Vagina (tissue), 2 donors: ENCODE measurements at regions of chr13 and their contacts with region 1.

Region 1: GRCh38 chr13:88704600-88705275 is 1033.6 kb downstream of the SLITRK5 start:
- DNase-seq: no peak
- H3K4me3 ChIP-seq: peak overlapping the region; percentile 15 to 27
- H3K27ac ChIP-seq: no peak overlapping the region
- H3K4me1 ChIP-seq: no peaks in the 10 kb centered on the region
- H3K27me3 ChIP-seq: no peaks in the 10 kb centered on the region
- CTCF ChIP-seq: no peak
- POLR2A ChIP-seq: no peak

Region 2: DNA sequence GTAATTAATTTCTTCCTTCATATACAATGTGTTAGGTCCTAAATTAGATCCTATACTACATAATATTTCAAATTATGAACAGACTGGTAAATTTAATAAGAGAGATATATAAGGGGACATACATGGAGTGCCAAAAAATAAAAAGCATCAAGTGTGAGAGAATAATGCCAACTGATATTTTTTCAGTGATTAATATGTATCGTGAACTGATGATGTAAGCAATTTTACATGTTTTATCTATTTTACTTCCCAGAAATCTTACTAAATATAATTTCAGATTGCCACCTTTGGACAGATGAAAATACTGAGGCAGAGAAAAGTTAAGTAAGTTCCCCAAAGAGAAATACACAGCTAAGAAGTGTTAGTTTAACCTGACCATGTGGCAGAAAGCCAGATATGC is 162.7 kb before region 1 on chr13:
- intact Hi-C with region 1: no loop called
- DNase-seq: no peak
- H3K4me3 ChIP-seq: no peak overlapping the region
- H3K27ac ChIP-seq: no peak overlapping the region
- H3K4me1 ChIP-seq: no peaks in the 10 kb centered on the region
- H3K27me3 ChIP-seq: no peaks in the 10 kb centered on the region
- CTCF ChIP-seq: no peak
- POLR2A ChIP-seq: no peak

Region 3: GRCh38 chr13:90430127-90430526 is 1725.4 kb after region 1 on chr13:
- intact Hi-C with region 1: loop called (anchors 5 kb)
- DNase-seq: no peak
- H3K4me3 ChIP-seq: no peak overlapping the region
- H3K27ac ChIP-seq: no peak overlapping the region
- H3K4me1 ChIP-seq: no peaks in the 10 kb centered on the region
- H3K27me3 ChIP-seq: no peaks in the 10 kb centered on the region
- CTCF ChIP-seq: no peak
- POLR2A ChIP-seq: no peak